ENCODE measurements at regions of chr1 and their contacts with region 1.

Region 1: DNA sequence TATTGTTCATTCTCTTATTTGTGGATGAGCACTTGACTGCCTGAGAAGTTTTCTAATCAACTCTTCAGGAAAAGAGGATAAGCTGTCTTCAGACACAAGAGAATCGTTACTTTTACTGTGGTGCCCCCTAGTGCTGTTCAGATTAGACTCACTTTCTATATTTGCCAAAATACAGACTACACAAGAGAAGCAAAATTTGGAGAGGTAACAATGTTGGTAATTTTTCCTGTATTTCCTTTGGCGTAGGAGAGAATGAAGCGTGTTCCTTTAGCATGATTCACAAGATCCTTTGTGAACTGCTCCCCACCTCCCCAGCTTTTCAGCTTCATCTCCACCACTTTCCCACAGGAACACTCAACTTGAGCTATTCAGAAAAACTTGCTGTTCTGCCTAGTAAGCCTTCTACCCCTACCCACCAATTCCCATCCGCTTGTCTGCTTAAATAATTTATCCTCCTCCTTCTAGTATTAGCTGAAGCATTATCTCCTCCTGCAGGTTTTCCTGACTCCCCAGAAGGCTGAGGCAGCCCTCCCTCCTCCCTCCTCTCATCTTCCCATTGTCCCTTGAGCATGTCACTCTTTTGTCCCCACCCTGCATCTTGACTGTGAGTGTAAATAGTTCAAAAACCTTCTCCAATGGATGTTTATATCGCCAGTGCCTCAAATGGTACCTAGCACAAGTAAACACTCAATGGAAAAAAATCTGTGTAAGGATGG is 4.5 kb downstream of the TNFSF4 start:
- DNase-seq: no peak
- H3K4me3 ChIP-seq: no peak overlapping the region
- H3K27ac ChIP-seq: no peak overlapping the region
- H3K4me1 ChIP-seq: peaks cover 0 to 37% (median 5%) of the 10 kb centered on the region in 3 donors
- H3K27me3 ChIP-seq: no peaks in the 10 kb centered on the region
- CTCF ChIP-seq: peak; percentile 47 to 83 (median 66)
- POLR2A ChIP-seq: no peak

Region 2: GRCh38 chr1:172745014-172745413 is 457.6 kb before region 1 on chr1:
- intact Hi-C with region 1: loop called (anchors 5 kb)
- DNase-seq: no peak
- H3K4me3 ChIP-seq: no peak overlapping the region
- H3K27ac ChIP-seq: peak overlapping the region in 3 of 4 donors; percentile 53 to 76 (median 69)
- H3K4me1 ChIP-seq: peaks cover 0 to 25% (median 15%) of the 10 kb centered on the region in 3 donors
- H3K27me3 ChIP-seq: peaks cover 0 to 10% (median 0%) of the 10 kb centered on the region in 4 donors
- CTCF ChIP-seq: peak; percentile 26 to 80 (median 62)
- POLR2A ChIP-seq: no peak

Region 3: GRCh38 chr1:172826096-172826743 is 376.4 kb before region 1 on chr1:
- intact Hi-C with region 1: loop called (anchors 5 kb)
- DNase-seq: no peak
- H3K4me3 ChIP-seq: peak overlapping the region in 3 of 4 donors; percentile 1 to 55 (median 11)
- H3K27ac ChIP-seq: peak overlapping the region; percentile 58 to 89 (median 82)
- H3K4me1 ChIP-seq: peaks cover 0 to 20% (median 10%) of the 10 kb centered on the region in 3 donors
- H3K27me3 ChIP-seq: no peaks in the 10 kb centered on the region
- CTCF ChIP-seq: peak; percentile 26 to 78 (median 60)
- POLR2A ChIP-seq: no peak

Region 4: DNA sequence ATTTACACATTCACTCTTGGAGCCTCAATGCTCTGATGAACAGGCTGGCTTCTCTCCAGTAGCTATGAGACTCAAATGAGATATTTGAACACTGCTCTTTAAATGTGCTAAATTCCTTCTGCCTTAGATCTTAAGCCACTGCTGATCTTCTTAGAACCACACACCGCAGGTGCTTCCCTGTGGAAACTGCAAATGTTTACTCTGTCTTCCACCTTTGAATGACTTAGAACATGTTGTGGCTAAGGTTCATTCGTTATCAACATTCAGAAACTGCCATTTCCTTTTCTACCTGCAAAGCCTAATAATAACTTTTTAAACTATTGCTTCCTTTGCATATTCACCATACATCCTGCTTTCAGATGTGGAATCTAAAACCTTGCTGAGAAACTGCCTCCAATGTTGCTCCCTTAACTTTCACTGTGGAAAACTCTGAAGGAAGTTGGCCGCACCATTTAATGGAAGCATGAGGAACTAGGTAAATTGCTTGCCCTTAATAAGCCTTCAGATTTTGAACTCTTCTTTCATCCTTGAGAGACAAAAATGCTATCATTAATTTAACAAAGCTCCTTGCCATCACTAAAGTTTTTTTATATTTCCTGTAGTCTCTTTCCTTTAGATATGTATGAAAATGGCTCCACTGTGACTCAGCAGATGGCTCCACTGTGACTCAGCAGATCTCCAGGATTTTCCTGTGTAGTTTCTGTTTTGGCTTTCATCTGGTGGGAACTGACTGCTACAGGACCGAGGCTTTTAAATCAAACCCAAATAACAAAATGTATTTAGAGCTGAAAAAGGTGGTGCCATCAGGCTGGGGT is 295.6 kb before region 1 on chr1:
- intact Hi-C with region 1: no loop called
- DNase-seq: no peak
- H3K4me3 ChIP-seq: no peak overlapping the region
- H3K27ac ChIP-seq: peak overlapping the region in 1 of 4 donors; percentile 40
- H3K4me1 ChIP-seq: peaks cover 0 to 12% (median 0%) of the 10 kb centered on the region in 3 donors
- H3K27me3 ChIP-seq: no peaks in the 10 kb centered on the region
- CTCF ChIP-seq: no peak
- POLR2A ChIP-seq: peak in 1 of 4 donors; percentile 11